Activated CD8-positive, alpha-beta T cell treated with anti-CD3 and anti-CD28 coated beads for 36 hours (primary cell): ENCODE measurements at regions of chr14 and their contacts with region 1.

Region 1: GRCh38 chr14:105709281-105710118 is 183.1 kb downstream of the TMEM121 start:
- DNase-seq: no peak
- ATAC-seq: no peak
- H3K4me3 Mint-ChIP-seq: no peak overlapping the region
- H3K27ac Mint-ChIP-seq: no peak overlapping the region
- H3K4me1 Mint-ChIP-seq: peaks cover 3% of the 10 kb centered on the region
- H3K27me3 Mint-ChIP-seq: no peaks in the 10 kb centered on the region
- CTCF ChIP-seq: no peak

Region 2: GRCh38 chr14:105562713-105563346 is 146.7 kb before region 1 on chr14:
- CTCF ChIA-PET with region 1: no interaction called
- POLR2A ChIA-PET with region 1: no interaction called
- intact Hi-C with region 1: no loop called
- DNase-seq: no peak
- ATAC-seq: no peak
- H3K4me3 Mint-ChIP-seq: no peak overlapping the region
- H3K27ac Mint-ChIP-seq: no peak overlapping the region
- H3K4me1 Mint-ChIP-seq: peaks cover 2% of the 10 kb centered on the region
- H3K27me3 Mint-ChIP-seq: no peaks in the 10 kb centered on the region
- CTCF ChIP-seq: no peak

Region 3: GRCh38 chr14:105589161-105590062 is 120.1 kb before region 1 on chr14:
- CTCF ChIA-PET with region 1: no interaction called
- POLR2A ChIA-PET with region 1: no interaction called
- intact Hi-C with region 1: loop called (anchors 5 kb)
- DNase-seq: no peak
- ATAC-seq: no peak
- H3K4me3 Mint-ChIP-seq: no peak overlapping the region
- H3K27ac Mint-ChIP-seq: no peak overlapping the region
- H3K4me1 Mint-ChIP-seq: no peaks in the 10 kb centered on the region
- H3K27me3 Mint-ChIP-seq: no peaks in the 10 kb centered on the region
- CTCF ChIP-seq: no peak

Region 4: GRCh38 chr14:105760691-105761346 is 51.3 kb after region 1 on chr14:
- CTCF ChIA-PET with region 1: no interaction called
- POLR2A ChIA-PET with region 1: no interaction called
- intact Hi-C with region 1: no loop called
- DNase-seq: no peak
- ATAC-seq: no peak
- H3K4me3 Mint-ChIP-seq: no peak overlapping the region
- H3K27ac Mint-ChIP-seq: no peak overlapping the region
- H3K4me1 Mint-ChIP-seq: no peaks in the 10 kb centered on the region
- H3K27me3 Mint-ChIP-seq: no peaks in the 10 kb centered on the region
- CTCF ChIP-seq: no peak